ENCODE measurements at regions of chr1 and their contacts with region 1.

Region 1: DNA sequence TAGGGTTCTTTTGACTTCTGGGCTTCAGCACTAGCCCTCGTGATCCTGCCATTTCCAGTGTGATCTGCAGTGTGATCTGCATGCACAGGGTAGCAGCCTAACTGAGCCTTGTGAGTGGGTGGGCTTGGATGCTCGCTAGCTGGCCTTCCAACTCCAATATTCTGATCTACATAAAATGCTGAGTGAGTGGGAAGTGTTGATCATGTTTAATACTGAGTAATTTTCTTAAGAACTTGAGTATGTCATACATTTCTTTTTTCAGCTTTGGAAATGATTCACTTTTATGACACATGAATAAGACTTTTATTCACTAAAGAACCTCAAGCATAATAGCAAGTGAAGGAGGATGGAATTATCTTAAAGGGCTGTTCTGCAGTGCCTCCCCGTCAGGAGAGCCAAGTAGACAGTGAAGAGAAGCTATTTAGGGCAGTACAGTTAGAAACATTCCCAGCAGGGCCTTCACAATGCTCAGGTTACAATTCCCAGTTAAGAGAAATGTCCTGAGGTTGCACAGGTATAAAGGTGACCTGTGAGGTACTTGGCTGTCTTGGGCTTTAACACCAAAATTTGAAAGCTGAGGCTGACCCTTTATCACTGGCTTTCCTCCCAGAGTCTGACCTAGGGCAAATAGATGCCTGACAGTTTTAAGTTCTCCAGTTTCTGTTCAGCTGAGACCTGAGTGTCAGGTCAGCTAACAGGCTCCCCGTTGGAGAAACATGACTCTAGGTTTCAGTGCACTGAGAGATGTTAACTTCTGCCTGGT is 29.1 kb upstream of the LRRC8C start:
- DNase-seq: no peak
- H3K4me3 ChIP-seq: no peak overlapping the region
- H3K27ac ChIP-seq: peak overlapping the region; percentile 52
- H3K4me1 ChIP-seq: peaks cover 66% of the 10 kb centered on the region
- H3K27me3 ChIP-seq: no peaks in the 10 kb centered on the region
- CTCF ChIP-seq: no peak

Region 2: GRCh38 chr1:89483010-89483756 is 120.6 kb before region 1 on chr1:
- intact Hi-C with region 1: loop called (anchors 5 kb)
- DNase-seq: peak; percentile 50
- H3K4me3 ChIP-seq: no peak overlapping the region
- H3K27ac ChIP-seq: no peak overlapping the region
- H3K4me1 ChIP-seq: no peaks in the 10 kb centered on the region
- H3K27me3 ChIP-seq: no peaks in the 10 kb centered on the region
- CTCF ChIP-seq: peak; percentile 87

Region 3: GRCh38 chr1:89754518-89754917 is 150.7 kb after region 1 on chr1:
- intact Hi-C with region 1: no loop called
- DNase-seq: no peak
- H3K4me3 ChIP-seq: no peak overlapping the region
- H3K27ac ChIP-seq: peak overlapping the region; percentile 41
- H3K4me1 ChIP-seq: peaks cover 30% of the 10 kb centered on the region
- H3K27me3 ChIP-seq: no peaks in the 10 kb centered on the region
- CTCF ChIP-seq: no peak

Measured in left ventricle myocardium inferior (tissue), 1 donor.